ENCODE measurements at regions of chr2 and their contacts with region 1.

Region 1: DNA sequence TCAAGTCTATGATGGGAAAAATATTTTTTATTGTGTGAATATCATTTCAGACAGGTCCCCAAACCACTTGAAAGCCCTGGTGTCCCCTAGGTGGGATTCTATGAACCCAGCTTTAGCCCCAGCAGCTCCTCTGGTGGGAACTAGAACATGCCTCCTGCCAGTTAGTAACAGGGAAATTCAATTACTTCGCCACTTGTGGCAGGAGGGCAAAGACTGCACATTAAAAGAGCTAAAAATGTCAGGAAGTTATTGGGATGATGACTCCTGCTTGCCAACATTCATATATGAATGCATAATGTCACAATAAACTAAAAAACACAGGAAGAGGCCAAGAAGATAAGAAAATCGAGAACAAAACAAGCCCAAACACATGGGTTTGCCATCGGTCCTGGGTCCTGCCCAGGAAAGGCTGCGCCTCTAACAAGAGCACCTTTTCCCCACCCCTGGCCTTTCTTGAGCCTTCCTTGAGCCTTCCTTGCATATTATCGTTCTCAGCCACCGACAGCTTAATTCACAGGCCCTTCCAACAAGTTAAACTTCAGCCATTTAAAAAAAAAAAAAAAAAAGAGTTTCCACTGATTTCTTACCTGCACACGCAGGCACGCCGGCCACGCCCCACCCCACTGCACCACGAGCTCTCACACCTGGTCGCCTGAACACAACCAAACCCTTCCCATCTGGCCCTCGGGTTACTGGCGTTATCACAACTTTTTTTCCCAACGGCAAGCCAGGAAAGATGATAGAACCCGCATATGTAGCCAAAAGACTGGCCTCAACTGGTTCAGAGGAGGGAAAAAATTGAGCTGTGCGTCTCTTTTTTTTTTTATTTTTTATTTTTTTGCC is 23.4 kb downstream of the BCL11A start:
- DNase-seq: no peak
- H3K4me3 ChIP-seq: no peak overlapping the region
- H3K27ac ChIP-seq: no peak overlapping the region
- H3K4me1 ChIP-seq: peaks cover 0 to 10% of the 10 kb centered on the region in 2 donors
- H3K27me3 ChIP-seq: no peaks in the 10 kb centered on the region
- CTCF ChIP-seq: no peak
- POLR2A ChIP-seq: no peak

Region 2: GRCh38 chr2:59449269-59449668 is 1080.7 kb before region 1 on chr2:
- intact Hi-C with region 1: loop called in 1 of 2 experiments (anchors 10 kb)
- DNase-seq: no peak
- H3K4me3 ChIP-seq: no peak overlapping the region
- H3K27ac ChIP-seq: no peak overlapping the region
- H3K4me1 ChIP-seq: no peaks in the 10 kb centered on the region
- H3K27me3 ChIP-seq: no peaks in the 10 kb centered on the region
- CTCF ChIP-seq: no peak
- POLR2A ChIP-seq: no peak

Region 3: GRCh38 chr2:60764736-60765534 is 234.9 kb after region 1 on chr2:
- intact Hi-C with region 1: no loop called
- DNase-seq: no peak
- H3K4me3 ChIP-seq: no peak overlapping the region
- H3K27ac ChIP-seq: no peak overlapping the region
- H3K4me1 ChIP-seq: no peaks in the 10 kb centered on the region
- H3K27me3 ChIP-seq: no peaks in the 10 kb centered on the region
- CTCF ChIP-seq: no peak
- POLR2A ChIP-seq: no peak